Heart right ventricle (tissue), 16 donors: ENCODE measurements at regions of chr12 and their contacts with region 1.

Region 1: DNA sequence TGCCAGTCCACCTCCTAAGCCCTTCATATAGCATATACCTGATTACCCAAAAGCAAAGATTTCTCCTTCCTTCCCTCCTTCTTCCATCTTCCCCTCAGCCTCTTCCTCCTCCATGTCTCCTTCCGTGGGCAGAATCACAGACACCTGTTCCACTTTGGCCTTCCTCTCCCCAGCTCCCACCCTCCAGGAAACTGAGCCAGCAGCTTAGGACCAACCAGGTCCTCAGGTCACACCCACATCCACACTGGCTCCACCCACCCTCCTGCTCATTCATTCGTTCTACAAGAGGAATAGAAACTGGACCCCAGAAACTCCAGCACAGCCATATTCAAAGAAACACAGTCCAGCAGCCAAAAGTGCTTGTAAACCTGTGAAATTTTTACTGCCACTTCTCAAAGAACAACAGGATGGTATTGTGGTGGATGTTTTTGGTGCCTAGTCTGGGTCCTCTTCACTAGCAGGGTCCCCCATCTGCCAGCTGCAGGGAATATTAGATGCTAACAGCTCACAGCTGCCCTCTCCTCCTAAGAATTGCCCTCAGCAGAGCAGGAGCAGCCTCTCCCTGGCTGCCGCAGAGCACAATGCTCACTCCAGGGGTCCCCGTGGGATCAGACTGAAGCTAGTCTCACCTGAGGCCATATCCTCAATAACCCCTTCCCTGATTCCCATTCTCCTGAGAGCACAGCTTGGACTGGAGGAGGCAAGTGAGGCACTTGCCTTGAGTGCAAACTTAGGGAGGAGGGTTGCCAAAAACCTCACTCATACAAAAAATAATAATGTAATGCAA is 18.4 kb downstream of the CMKLR1 start:
- DNase-seq: no peak
- ATAC-seq: no peak
- H3K4me3 ChIP-seq: no peak overlapping the region
- H3K27ac ChIP-seq: no peak overlapping the region
- H3K4me1 ChIP-seq: peaks cover 0 to 42% (median 4%) of the 10 kb centered on the region in 9 donors
- H3K27me3 ChIP-seq: peaks cover 0 to 3% (median 0%) of the 10 kb centered on the region in 7 donors
- CTCF ChIP-seq: no peak

Region 2: DNA sequence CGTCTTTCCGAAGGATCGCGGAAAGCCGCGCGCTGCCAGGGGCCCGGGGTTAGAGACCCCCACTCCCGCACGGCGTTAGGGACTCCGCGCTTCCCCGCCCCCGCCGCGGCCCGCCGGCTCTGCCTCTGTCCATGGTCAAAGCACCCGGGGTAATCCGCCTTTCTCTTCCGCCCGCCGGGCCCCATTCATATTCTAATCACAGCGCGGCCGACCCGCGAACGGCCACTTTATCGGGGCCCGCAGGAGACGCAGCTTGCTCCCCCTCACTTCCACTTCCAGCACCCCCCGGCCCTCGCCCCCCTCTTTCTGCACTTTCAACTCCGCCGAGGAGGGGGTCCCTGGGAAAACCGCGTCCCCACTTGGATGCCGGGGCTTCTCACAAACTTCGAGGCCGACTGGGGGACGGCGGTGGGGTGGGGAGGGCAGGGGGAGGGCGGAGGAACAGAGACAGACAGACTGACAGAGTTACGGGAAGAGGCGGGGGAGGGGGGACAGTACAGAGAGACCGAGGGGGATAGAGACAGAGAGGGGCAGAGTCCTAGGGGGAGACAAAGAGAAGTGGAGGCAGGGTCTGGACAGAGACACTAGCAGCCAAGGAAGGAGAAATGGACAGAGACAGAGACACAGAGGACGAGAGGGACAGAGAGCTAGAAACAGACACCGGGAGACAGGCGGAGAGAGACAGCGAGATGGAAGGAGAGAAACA is 1739.0 kb before region 1 on chr12:
- intact Hi-C with region 1: loop called in 1 of 10 experiments (anchors 5 kb)
- DNase-seq: no peak
- ATAC-seq: peak in 5 of 8 donors; percentile 51 to 64 (median 57)
- H3K4me3 ChIP-seq: peak overlapping the region in 8 of 10 donors; percentile 9 to 48 (median 32)
- H3K27ac ChIP-seq: no peak overlapping the region
- H3K4me1 ChIP-seq: peaks cover 6 to 64% (median 47%) of the 10 kb centered on the region in 9 donors
- H3K27me3 ChIP-seq: peaks cover 22 to 100% (median 97%) of the 10 kb centered on the region in 7 donors
- CTCF ChIP-seq: no peak

Region 3: GRCh38 chr12:108017472-108018057 is 303.1 kb before region 1 on chr12:
- intact Hi-C with region 1: no loop called
- DNase-seq: no peak
- ATAC-seq: no peak
- H3K4me3 ChIP-seq: no peak overlapping the region
- H3K27ac ChIP-seq: no peak overlapping the region
- H3K4me1 ChIP-seq: no peaks in the 10 kb centered on the region
- H3K27me3 ChIP-seq: peaks cover 0 to 42% (median 16%) of the 10 kb centered on the region in 7 donors
- CTCF ChIP-seq: no peak

Region 4: DNA sequence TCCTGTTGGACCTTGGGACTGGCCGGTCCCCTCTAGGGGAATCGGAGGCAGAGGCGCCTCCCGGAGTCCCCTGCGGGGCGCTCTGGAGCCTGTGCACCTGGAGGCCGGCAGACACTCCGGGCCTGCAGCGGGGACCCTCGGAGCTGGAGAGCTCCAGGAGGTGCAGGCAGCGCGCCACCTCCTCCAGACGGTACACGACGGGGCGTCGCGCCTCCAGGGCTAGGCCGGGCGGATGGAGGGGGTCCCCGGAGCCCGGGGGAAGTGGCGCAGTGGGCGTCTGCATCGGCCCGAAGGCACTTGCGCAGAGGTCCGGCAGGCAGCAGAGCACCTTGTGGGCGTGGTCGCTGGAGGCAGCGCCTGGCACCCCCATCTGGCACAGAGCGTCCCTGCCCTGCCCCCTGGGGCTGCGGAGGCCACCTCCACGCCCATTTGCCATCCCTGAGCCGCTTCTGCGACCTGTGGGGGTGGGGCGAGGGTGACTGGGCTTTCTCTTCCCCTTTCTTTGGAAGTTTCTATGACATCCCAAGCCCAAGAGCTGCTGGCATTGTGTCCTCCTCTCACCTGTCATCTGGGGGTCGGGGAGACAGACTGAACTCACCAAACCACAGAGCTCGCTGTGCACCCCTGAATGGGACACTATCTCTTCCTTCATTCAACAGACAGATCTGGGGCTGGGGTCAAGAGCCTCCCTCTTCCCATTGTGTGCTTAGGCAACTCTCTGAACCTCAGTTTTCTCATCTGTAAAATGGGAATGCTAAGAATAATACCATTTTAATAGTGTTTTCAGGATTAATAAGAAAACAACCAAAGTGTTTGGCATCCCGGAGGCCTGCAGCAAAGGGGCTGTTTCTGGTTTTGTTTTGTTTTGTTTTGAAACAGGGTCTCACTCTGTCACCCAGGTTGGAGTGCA is 448.1 kb after region 1 on chr12:
- intact Hi-C with region 1: no loop called
- DNase-seq: peak in 1 of 2 donors; percentile 64
- ATAC-seq: peak in 6 of 8 donors; percentile 9 to 53 (median 32)
- H3K4me3 ChIP-seq: peak overlapping the region in 9 of 10 donors; percentile 24 to 48 (median 42)
- H3K27ac ChIP-seq: peak overlapping the region in 1 of 10 donors; percentile 29
- H3K4me1 ChIP-seq: peaks cover 10 to 43% (median 27%) of the 10 kb centered on the region in 9 donors
- H3K27me3 ChIP-seq: peaks cover 0 to 6% (median 0%) of the 10 kb centered on the region in 7 donors
- CTCF ChIP-seq: peak in 1 of 9 donors; percentile 9